Activated B cell treated with CpG ODN at 0.5 μM for 24 hours (primary cell): ENCODE measurements at regions of chr10 and their contacts with region 1.

Region 1: GRCh38 chr10:82811621-82812020 is 936.6 kb downstream of the NRG3 start:
- DNase-seq: no peak
- ATAC-seq: no peak
- H3K4me3 Mint-ChIP-seq: no peak overlapping the region
- H3K27ac Mint-ChIP-seq: no peak overlapping the region
- H3K4me1 Mint-ChIP-seq: no peaks in the 10 kb centered on the region
- H3K27me3 Mint-ChIP-seq: no peaks in the 10 kb centered on the region
- CTCF ChIP-seq: no peak

Region 2: DNA sequence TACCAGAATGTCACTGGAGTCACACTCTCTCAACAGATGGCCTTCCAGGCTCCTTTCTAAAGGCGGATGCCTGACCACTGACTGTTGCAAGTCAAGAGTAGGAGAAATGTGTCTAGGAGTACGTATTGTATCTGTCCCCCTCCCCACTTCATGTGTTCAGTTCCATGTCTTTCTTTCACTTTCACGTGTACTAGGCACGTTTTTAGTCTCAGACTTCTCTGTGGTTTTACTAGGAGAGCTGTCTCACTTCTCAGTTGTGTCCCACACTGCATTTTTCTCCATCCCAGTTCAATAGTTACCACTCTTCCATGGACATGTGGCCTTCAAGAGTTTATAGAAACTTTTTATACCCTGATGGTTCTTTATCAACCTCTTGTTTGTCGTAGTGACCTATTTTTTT is 43.6 kb before region 1 on chr10:
- CTCF ChIA-PET with region 1: no interaction called
- POLR2A ChIA-PET with region 1: no interaction called
- intact Hi-C with region 1: loop called (anchors 5 kb)
- DNase-seq: no peak
- ATAC-seq: no peak
- H3K4me3 Mint-ChIP-seq: no peak overlapping the region
- H3K27ac Mint-ChIP-seq: no peak overlapping the region
- H3K4me1 Mint-ChIP-seq: no peaks in the 10 kb centered on the region
- H3K27me3 Mint-ChIP-seq: no peaks in the 10 kb centered on the region
- CTCF ChIP-seq: no peak

Region 3: GRCh38 chr10:83214136-83214535 is 402.5 kb after region 1 on chr10:
- CTCF ChIA-PET with region 1: no interaction called
- POLR2A ChIA-PET with region 1: no interaction called
- intact Hi-C with region 1: no loop called
- DNase-seq: no peak
- ATAC-seq: no peak
- H3K4me3 Mint-ChIP-seq: no peak overlapping the region
- H3K27ac Mint-ChIP-seq: no peak overlapping the region
- H3K4me1 Mint-ChIP-seq: no peaks in the 10 kb centered on the region
- H3K27me3 Mint-ChIP-seq: no peaks in the 10 kb centered on the region
- CTCF ChIP-seq: no peak

Region 4: DNA sequence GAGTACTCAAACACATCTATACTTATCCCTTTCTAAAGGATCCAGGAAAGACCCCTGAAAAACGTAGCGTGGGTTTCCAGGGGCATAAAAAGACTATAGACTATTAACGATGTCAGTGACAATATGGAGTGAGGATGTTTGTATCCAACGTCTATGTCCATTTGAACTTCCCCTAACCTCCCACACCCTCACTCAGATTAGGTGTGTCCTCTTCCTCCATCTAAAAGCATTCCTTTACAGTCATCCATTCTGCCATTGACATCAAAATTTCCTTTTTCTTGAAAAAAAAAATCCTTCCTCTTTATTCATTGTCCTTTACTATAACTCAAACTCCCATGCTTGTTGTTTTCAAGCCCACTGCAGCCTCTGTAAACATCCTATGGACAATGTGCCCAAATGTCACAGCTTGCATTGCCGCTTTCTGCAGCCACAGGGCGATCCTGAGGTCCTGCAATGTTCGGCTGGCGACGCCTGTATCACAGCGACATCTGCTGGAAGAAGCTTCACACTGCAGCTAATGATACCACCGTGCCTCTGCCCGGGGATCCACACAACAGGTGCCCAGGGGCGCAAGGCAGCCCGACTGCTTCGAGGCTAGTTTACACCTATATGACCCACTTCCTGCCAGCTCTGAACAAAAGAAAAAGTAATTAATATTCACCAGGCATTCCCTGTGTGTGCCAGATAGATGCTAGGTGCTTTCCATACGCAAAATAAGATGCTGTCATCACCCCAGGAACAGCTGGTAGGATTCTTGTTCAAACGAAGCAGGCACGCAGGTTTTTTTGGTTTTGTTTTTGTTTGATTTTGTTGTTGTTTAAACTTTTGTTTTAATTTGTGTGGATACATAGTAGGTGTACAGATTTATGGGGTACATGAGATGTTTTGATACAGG is 1059.8 kb after region 1 on chr10:
- CTCF ChIA-PET with region 1: no interaction called
- POLR2A ChIA-PET with region 1: no interaction called
- intact Hi-C with region 1: loop called (anchors 5 kb)
- DNase-seq: peak; percentile 20
- ATAC-seq: peak; percentile 62
- H3K4me3 Mint-ChIP-seq: no peak overlapping the region
- H3K27ac Mint-ChIP-seq: no peak overlapping the region
- H3K4me1 Mint-ChIP-seq: no peaks in the 10 kb centered on the region
- H3K27me3 Mint-ChIP-seq: no peaks in the 10 kb centered on the region
- CTCF ChIP-seq: peak; percentile 64